Aorta (tissue), 5 donors: ENCODE measurements at regions of chr6 and their contacts with region 1.

Region 1: DNA sequence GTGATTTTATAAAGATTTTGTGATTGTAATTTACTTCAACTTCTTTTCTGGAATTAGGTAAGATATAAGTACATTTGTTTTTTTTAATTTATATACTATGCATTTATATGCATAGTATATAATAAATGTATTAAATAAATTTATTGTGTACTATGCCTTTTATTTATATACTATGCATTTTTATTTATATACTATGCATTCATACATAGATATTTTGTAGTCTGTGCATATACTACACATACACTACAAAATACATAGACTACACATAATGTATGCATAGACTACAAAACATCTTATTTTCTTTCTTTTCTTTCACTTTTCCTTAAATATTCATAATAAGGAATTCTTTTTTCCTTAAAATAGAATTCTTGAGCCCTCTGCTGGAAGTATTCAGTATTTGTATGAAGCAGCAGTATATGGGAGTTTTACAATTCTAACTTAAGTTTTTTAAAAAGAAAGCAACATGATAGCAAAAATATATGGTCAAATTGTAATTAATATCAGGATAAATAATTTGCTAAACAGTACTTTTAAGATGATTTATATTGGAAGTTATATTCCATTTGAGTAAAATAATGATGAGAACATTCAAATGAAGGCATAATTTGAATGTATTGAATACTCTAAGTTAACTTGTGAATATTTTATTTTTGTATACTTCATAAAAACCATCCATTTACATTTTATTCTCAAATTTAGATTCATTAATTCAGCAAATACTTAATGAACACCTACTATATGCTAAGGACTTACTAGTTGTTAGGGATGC is 129.3 kb downstream of the KLHL32 start:
- DNase-seq: no peak
- ATAC-seq: no peak
- H3K4me3 ChIP-seq: no peak overlapping the region
- H3K27ac ChIP-seq: no peak overlapping the region
- H3K4me1 ChIP-seq: no peaks in the 10 kb centered on the region
- H3K27me3 ChIP-seq: no peaks in the 10 kb centered on the region

Region 2: DNA sequence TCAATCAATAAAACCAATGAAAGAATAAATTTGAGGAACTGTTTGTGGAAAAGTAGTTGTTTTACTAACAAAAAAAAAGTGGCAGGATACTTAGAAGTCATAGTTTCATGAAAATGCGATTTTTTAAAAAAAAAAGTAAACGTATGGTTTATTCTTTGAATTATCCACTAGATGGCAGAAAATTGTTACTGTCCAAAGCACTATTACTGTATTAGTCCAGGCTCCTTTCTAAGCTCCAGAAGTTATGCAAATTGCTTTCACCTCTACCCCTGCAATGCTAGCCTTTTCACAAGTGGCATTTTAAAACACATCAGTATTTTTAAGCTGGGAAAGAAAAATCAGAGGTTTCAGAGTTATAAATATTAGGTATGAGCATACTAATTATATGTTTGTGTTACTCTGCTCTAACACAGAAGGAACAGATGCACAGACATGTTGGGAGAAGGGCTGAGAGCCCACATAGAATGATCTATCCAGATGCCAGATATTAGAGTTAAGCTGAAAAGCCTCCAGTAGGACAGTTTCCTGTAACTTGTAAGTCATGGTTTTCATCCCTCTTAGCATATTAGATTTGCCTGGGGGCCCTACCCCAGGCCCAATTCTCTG is 427.0 kb before region 1 on chr6:
- intact Hi-C with region 1: loop called (anchors 5 kb)
- DNase-seq: no peak
- ATAC-seq: no peak
- H3K4me3 ChIP-seq: no peak overlapping the region
- H3K27ac ChIP-seq: no peak overlapping the region
- H3K4me1 ChIP-seq: no peaks in the 10 kb centered on the region
- H3K27me3 ChIP-seq: no peaks in the 10 kb centered on the region